Activated CD8-positive, alpha-beta T cell treated with anti-CD3 and anti-CD28 coated beads, Interleukin-2, amount 10 ng/mL, durations not matched to agents 7 days and 5 days (primary cell): ENCODE measurements at regions of chr3 and their contacts with region 1.

Region 1: DNA sequence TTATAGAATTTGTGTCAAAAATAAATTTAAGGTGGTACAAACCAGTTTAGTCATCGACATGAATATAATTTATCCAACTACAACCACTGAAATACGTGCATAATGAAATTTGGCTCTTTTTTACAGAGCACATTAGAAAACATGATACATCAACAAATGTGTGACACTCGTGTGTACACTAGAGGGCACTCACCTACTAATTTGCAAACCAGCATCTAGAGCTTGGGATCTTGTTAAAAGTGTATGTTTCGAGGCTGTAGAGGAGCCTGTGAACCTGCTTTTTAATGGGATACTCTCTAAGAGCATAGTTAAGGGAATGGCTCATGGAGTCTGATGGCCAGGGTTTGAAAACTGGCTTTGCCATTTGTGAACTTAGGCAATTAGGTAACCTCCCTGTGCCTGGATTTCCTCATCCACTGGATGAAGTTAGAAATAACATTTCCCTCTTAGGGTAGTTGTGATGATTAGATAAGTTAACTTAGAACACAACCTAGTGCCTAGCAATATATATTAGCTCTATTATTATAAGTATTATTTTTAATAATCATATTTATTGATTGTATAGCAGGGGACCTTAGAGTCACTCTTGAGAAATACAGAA is 8.8 kb upstream of the CPOX start:
- DNase-seq: peak; percentile 56
- ATAC-seq: peak; percentile 85
- H3K4me3 Mint-ChIP-seq: no peak overlapping the region
- H3K27ac Mint-ChIP-seq: no peak overlapping the region
- H3K4me1 Mint-ChIP-seq: peaks cover 8% of the 10 kb centered on the region
- H3K27me3 Mint-ChIP-seq: peaks cover 8% of the 10 kb centered on the region

Region 2: GRCh38 chr3:98039322-98040024 is 562.7 kb before region 1 on chr3:
- CTCF ChIA-PET with region 1: interaction called, 40 read pairs
- POLR2A ChIA-PET with region 1: no interaction called
- DNase-seq: peak; percentile 85
- ATAC-seq: peak; percentile 98
- H3K4me3 Mint-ChIP-seq: peak overlapping the region; percentile 73
- H3K27ac Mint-ChIP-seq: peak overlapping the region; percentile 79
- H3K4me1 Mint-ChIP-seq: peaks cover 9% of the 10 kb centered on the region
- H3K27me3 Mint-ChIP-seq: peaks cover 34% of the 10 kb centered on the region

Region 3: GRCh38 chr3:98573181-98573728 is 28.9 kb before region 1 on chr3:
- CTCF ChIA-PET with region 1: interaction called, 16 read pairs
- POLR2A ChIA-PET with region 1: no interaction called
- DNase-seq: no peak
- ATAC-seq: peak; percentile 59
- H3K4me3 Mint-ChIP-seq: peak overlapping the region; percentile 32
- H3K27ac Mint-ChIP-seq: peak overlapping the region; percentile 81
- H3K4me1 Mint-ChIP-seq: peaks cover 68% of the 10 kb centered on the region
- H3K27me3 Mint-ChIP-seq: no peaks in the 10 kb centered on the region

Region 4: GRCh38 chr3:98612587-98612986 is 10.4 kb after region 1 on chr3:
- CTCF ChIA-PET with region 1: interaction called, 17 read pairs
- POLR2A ChIA-PET with region 1: no interaction called
- DNase-seq: no peak
- ATAC-seq: no peak
- H3K4me3 Mint-ChIP-seq: no peak overlapping the region
- H3K27ac Mint-ChIP-seq: no peak overlapping the region
- H3K4me1 Mint-ChIP-seq: no peaks in the 10 kb centered on the region
- H3K27me3 Mint-ChIP-seq: peaks cover 4% of the 10 kb centered on the region

Region 5: DNA sequence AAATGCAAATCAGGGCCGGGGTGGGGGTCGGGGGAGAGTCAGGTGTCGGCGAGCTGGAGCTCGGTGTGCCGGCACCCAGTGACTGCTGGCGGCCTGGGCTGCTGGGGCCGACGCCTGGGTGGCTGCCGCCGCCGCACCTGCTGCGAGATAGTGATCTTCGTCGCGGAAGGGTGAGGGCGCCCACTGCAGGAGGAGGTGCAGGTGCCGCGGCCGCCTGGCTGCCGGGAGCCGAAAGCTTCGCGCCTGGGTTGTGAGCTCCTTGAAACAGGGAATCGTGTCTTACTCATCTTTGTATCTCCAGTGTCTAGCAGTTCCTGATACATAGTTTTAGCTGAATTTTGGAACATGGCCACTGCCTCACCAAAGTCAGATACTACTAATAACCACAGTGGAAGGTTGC is 55.3 kb after region 1 on chr3:
- CTCF ChIA-PET with region 1: interaction called, 15 read pairs
- POLR2A ChIA-PET with region 1: no interaction called
- DNase-seq: peak; percentile 64
- ATAC-seq: peak; percentile 92
- H3K4me3 Mint-ChIP-seq: no peak overlapping the region
- H3K27ac Mint-ChIP-seq: no peak overlapping the region
- H3K4me1 Mint-ChIP-seq: peaks cover 3% of the 10 kb centered on the region
- H3K27me3 Mint-ChIP-seq: peaks cover 26% of the 10 kb centered on the region

Region 6: DNA sequence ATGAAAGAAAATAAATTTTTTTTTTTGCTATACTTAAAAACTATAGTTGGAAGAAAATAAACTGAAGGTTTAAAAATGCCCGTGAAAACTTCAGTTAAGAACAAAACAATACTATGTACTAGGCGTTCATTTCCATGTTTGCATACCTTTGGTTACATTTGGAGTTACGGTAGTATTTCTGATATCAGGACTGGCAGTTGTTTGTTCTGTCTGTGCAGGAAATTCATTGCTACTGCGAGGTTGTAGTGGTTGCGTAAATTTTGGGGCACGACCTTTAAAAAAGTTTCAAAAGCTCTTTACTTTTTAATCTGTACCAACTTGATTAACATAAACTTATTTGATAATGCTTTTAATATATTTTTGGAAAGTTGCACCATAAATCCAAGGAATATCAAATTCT is 208.9 kb after region 1 on chr3:
- CTCF ChIA-PET with region 1: interaction called, 78 read pairs
- POLR2A ChIA-PET with region 1: no interaction called
- DNase-seq: no peak
- ATAC-seq: no peak
- H3K4me3 Mint-ChIP-seq: no peak overlapping the region
- H3K27ac Mint-ChIP-seq: no peak overlapping the region
- H3K4me1 Mint-ChIP-seq: no peaks in the 10 kb centered on the region
- H3K27me3 Mint-ChIP-seq: no peaks in the 10 kb centered on the region

Region 7: GRCh38 chr3:98817547-98818041 is 215.4 kb after region 1 on chr3:
- CTCF ChIA-PET with region 1: interaction called, 78 read pairs
- POLR2A ChIA-PET with region 1: no interaction called
- DNase-seq: no peak
- ATAC-seq: peak; percentile 57
- H3K4me3 Mint-ChIP-seq: no peak overlapping the region
- H3K27ac Mint-ChIP-seq: no peak overlapping the region
- H3K4me1 Mint-ChIP-seq: no peaks in the 10 kb centered on the region
- H3K27me3 Mint-ChIP-seq: no peaks in the 10 kb centered on the region

Region 8: GRCh38 chr3:99394831-99395778 is 792.9 kb after region 1 on chr3:
- CTCF ChIA-PET with region 1: no interaction called
- POLR2A ChIA-PET with region 1: no interaction called
- DNase-seq: no peak
- ATAC-seq: no peak
- H3K4me3 Mint-ChIP-seq: no peak overlapping the region
- H3K27ac Mint-ChIP-seq: no peak overlapping the region
- H3K4me1 Mint-ChIP-seq: no peaks in the 10 kb centered on the region
- H3K27me3 Mint-ChIP-seq: no peaks in the 10 kb centered on the region